AG04450 (cell line): ENCODE measurements at regions of chr19 and their contacts with region 1.

Region 1: DNA sequence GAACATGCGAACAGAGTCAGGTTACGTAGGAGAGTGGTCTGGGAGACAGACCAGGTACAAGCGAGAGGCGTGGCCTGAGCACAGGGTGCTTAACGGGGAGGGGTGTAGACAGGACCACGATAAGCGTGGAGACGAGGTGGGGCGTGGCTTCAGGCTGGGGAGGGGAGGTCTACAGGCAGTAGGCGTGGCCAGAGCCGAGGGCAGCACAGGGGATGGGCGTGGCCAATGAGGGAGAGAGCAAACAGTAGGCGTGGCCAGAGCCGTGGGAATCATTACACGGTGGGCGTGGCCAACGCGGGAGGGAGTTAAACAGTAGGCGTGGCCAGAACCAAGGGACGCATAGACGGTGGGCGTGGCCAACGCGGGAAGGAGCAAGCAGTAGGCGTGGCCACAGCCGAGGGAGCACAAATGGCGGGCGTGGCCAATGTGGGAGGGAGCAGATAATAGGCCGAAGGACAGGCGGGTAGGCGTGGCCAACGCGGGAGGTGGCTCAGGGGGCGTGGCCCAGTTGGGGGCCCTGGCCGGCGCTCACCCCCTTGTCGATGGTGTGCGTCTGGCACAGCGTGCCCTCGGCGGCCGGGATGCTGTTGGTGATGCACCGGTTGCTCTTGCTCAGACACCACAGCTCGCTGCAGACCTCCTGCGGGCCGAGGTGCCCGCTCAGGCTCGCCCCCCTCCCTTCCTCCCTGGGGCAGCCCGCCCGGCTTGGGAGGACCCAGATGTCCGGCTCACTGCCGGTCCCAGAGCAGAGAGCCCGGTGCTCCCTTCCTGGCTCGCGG is 15.2 kb upstream of the MYO1F start:
- DNase-seq: peak; percentile 90
- H3K4me3 ChIP-seq: peak overlapping the region; percentile 53
- H3K27ac ChIP-seq: no peak overlapping the region
- H3K27me3 ChIP-seq: peaks cover 11% of the 10 kb centered on the region
- CTCF ChIP-seq: no peak

Region 2: GRCh38 chr19:8438236-8438635 is 154.2 kb before region 1 on chr19:
- CTCF ChIA-PET with region 1: no interaction called
- POLR2A ChIA-PET with region 1: interaction called, 10 read pairs
- DNase-seq: no peak
- H3K4me3 ChIP-seq: no peak overlapping the region
- H3K27ac ChIP-seq: no peak overlapping the region
- H3K27me3 ChIP-seq: no peaks in the 10 kb centered on the region
- CTCF ChIP-seq: no peak

Region 3: GRCh38 chr19:8561075-8561764 is 31.2 kb before region 1 on chr19:
- CTCF ChIA-PET with region 1: no interaction called
- POLR2A ChIA-PET with region 1: no interaction called
- DNase-seq: no peak
- H3K4me3 ChIP-seq: no peak overlapping the region
- H3K27ac ChIP-seq: no peak overlapping the region
- H3K27me3 ChIP-seq: peaks cover 3% of the 10 kb centered on the region
- CTCF ChIP-seq: no peak